Posterior vena cava (tissue), 2 donors: ENCODE measurements at regions of chrX and their contacts with region 1.

Region 1: DNA sequence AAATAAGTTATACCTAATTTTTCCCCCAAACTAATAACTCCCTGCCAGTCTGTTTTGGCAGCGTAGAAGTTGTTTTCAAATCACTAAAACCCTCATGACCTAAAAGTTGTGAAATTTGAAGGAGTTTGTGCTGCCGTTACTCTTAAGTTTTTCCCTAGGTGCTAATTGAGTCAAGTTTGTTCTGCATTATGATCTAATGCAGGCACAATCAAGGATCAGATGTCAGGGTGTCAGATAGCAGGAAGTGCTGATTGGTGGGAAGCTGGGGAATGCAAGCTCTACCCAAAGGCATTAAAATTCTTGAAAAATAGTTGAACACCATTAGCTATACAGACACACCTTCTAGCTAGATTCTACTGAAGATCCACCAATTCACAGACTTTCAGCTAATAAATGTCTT is 51.9 kb downstream of the ARX start:
- DNase-seq: no peak

Region 2: DNA sequence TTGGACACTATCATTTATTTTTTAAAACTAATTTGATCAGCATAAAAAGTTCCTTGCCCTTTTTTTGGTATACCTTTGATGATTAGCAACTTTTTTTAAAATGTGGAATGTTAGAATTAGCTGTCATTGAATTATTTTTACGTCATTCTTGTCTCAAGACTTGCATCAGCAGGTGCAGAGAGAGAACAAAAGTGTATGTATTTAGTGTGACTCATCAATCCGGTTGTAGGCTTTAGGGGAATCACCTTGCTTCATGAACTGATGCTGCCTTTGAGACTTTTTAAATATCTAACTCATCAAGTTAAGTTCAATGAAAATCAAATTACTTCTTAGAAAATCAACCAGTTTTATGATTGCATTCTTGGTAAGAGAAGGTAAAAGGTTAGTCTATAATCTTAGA is 73.1 kb before region 1 on chrX:
- intact Hi-C with region 1: loop called in 1 of 2 experiments (anchors 2 kb)
- DNase-seq: no peak

Region 3: GRCh38 chrX:25083661-25084060 is 119.8 kb after region 1 on chrX:
- intact Hi-C with region 1: no loop called
- DNase-seq: no peak